CD8-positive, alpha-beta T cell (primary cell): ENCODE measurements at regions of chr18 and their contacts with region 1.

Region 1: DNA sequence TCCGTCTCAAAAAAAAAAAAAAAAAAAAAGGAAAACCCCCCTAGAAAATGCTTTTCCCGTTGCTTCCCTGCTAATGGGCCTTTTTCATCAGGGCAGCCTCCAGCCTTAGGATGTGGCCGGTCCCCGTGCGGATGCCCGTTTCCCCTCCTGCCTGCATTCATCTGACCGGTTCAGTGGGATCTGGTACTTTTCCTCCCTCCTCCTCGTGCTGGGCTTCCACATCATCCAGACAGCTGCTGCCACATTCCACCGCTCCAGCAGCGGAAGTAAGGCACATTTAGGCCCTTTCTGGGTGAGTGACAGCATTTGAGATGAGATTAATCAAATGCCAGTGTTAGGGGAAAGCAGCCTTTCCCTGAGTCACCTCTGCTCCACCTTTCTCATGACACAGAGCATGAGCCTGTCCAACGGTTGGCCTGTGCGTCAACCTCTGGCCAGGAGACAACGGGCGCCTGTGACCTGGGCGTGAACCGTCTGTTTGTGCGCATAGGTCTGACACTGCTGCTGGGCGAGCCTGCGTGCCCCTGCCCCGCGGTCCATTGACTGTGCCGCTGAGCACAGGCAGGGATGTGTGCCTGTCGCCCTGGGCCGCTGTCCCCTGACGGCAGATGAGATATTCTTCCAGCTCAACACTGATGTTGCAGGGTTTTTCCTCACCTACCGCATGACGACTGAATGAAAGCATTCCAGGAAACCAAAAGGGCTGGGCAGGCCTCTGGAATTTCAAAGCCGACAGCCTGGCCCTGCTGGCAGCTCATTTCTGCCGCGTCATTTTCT is 174.0 kb downstream of the TGIF1 start:
- DNase-seq: no peak
- ATAC-seq: no peak
- H3K4me3 ChIP-seq: no peak overlapping the region
- H3K4me3 Mint-ChIP-seq: no peak overlapping the region
- H3K27ac ChIP-seq: no peak overlapping the region
- H3K27ac Mint-ChIP-seq: no peak overlapping the region
- H3K4me1 ChIP-seq: peaks cover 16% of the 10 kb centered on the region
- H3K4me1 Mint-ChIP-seq: peaks cover 7% of the 10 kb centered on the region
- H3K27me3 ChIP-seq: no peaks in the 10 kb centered on the region
- H3K27me3 Mint-ChIP-seq: no peaks in the 10 kb centered on the region
- CTCF ChIP-seq: no peak

Region 2: DNA sequence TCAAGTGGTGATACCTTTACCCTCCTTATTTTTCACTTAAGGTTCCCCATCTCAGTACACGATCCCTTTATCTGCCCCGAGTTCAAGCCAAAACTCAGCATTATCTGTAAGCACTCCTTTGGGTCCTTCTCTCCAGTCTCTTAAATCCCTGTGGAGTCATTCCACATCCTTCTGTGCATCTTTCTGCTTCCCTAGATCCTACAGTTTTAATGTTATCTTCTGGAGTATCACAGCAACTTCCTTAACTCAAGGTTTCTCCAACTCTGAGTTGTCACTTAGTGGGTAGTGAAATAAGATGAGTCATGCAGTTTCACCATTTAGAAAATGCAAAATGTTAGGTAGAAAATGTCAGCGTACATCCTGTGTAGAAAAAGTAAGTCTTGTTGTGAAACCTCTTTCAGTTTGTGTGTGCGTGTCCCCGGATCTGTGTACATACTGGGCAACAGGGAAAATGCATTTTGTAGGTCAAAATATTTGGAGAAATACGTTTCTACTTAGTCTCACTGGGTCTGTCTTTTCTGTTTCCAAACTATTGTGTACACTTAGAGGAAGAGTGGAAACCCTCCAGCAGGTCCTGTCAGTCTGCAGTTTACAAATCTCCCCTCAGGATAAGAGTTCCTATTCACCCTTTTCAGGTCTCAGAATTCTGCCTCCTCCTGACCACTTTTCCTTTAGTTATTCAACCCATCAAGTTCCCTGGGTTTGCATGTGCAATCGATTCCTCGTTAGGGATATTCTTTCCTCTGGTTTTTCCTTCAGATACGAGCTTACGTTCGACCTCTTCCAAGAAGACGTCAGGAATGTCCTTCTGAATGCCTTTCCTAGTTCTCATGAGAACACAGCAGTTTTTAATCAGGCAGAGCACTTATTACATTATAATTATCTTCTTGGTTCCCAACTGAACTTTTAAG is 19.2 kb before region 1 on chr18:
- CTCF ChIA-PET with region 1: no interaction called
- POLR2A ChIA-PET with region 1: interaction called, 4 read pairs
- intact Hi-C with region 1: loop called in 1 of 2 experiments (anchors 2 kb)
- DNase-seq: peak in 3 of 9 experiments; percentile 22 to 79 (median 61)
- ATAC-seq: peak; percentile 62
- H3K4me3 ChIP-seq: peak overlapping the region; percentile 24 to 52
- H3K4me3 Mint-ChIP-seq: no peak overlapping the region
- H3K27ac ChIP-seq: peak overlapping the region; percentile 14 to 90
- H3K27ac Mint-ChIP-seq: no peak overlapping the region
- H3K4me1 ChIP-seq: peaks cover 44% of the 10 kb centered on the region
- H3K4me1 Mint-ChIP-seq: peaks cover 14% of the 10 kb centered on the region
- H3K27me3 ChIP-seq: no peaks in the 10 kb centered on the region
- H3K27me3 Mint-ChIP-seq: no peaks in the 10 kb centered on the region
- CTCF ChIP-seq: no peak